AG04449 (cell line): ENCODE measurements at regions of chr1 and their contacts with region 1.

Region 1: DNA sequence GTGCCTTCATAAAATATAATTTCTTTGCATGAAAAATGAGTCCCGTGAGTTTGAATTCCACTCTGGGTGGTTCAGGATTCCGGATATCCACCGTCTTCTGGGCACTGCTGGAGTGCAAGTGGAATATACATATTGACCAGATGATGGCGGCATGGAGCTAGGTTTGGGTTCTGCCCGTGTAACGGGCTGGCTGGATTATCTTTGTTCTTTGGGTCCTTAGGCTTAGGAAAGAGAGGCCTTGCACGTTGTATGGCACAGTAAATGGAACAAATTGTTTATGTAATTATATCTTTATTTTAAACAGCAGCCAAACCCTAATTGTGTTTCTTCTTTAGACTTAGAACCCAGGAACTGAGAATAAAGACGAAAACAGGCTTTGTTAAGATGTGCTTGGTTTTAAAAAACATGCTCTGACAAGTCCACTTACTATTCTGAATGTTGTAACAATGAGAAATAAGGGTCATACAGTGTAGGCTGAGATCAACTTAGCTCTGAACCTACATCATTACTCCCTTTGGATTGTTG is 13.5 kb upstream of the ACBD6 start:
- DNase-seq: no peak
- H3K4me3 ChIP-seq: no peak overlapping the region
- CTCF ChIP-seq: peak; percentile 68

Region 2: DNA sequence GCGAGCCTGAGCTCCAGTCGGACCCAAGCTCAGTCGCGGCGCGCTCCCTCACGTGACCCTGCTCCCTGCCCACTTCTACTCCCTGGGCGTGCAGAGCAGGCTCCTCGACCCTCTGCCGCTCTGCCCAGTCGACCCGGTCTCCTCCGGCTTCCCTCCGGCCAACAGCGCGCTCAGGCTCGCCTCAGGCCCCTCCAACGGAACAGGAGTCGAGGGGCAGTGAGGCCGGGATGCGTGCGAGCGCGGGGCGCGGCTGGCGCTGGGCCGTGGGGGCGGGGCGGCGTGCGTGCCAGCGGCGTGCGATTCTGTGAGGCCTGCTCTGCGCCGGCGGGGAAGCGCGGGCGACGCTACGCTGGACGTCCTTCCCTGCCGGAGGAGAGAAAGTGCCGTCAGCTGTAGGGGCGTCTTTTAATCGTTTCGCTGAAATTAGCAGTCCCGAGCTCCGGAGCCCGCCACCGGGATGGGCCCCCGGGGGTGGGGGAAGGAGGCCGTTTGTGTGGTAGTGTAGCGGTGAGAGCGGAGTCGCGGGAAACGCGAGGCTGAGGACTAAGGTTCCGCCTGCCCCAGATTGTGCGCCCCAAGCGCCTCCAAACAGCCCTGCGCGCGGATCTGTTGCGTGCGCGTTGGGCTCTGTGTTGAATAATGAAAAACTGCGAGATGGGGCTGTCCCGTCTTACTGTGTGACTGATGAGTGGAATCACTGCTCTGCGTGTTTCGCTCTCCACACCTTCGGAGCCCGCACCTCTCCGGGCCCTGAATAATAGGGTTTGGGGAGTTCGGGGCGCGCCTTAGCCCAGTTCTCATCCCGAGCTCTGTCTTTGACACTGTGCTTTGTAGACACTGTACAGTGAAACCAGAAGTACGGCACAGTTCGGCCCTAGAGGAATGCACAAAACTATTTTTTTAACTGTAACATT is 13.3 kb before region 1 on chr1 and contains the start of gene ACBD6:
- CTCF ChIA-PET with region 1: interaction called, 62 read pairs
- POLR2A ChIA-PET with region 1: no interaction called
- DNase-seq: no peak
- H3K4me3 ChIP-seq: peak within 1 kb of the TSS; percentile 91
- CTCF ChIP-seq: peak; percentile 14

Region 3: DNA sequence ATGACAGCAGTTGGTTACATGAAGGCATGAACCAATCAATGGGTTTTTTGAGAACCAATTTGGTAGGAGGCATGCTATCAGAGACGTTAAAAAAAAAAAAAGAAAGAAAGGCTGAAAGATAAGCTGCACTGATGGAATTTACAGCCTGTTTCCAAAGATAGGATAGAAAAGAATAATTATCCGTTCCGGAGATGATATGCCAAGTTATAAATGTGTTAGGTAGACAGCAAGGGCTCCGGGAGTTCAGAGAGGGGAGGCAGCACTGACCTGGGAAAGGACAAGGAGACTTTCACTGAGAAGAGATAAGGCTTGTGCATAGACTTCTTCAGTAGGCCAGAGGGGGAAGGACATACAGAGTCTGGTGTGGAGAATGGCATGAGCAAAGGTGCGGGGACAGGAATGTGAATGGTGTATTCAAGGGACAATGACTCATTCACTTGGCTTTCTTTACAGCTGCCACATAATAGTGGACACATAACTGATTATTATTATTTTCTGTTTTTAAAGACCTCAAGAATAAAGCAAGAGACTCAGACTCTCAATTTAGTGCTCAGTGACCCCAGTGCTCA is 11.3 kb after region 1 on chr1:
- CTCF ChIA-PET with region 1: interaction called, 30 read pairs
- POLR2A ChIA-PET with region 1: no interaction called
- DNase-seq: no peak
- H3K4me3 ChIP-seq: no peak overlapping the region
- CTCF ChIP-seq: no peak

Region 4: DNA sequence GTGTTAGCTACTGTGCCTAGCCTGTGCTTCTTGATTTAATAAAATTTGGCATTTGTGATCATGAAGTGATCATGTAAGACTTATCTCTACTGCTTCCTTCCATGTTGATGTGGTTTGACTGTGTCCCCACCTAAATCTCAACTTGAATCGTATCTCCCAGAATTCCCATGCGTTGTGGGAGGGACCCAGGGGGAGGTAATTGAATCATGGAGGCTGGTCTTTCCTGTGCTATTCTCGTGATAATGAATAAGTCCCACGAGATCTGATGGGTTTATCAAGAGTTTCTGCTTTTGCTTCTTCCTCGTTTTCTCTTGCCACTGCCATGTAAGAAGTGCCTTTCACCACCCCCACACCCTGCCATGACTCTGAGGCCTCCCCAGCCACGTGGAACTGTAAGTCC is 42.7 kb after region 1 on chr1 and contains the start of gene OVAAL:
- CTCF ChIA-PET with region 1: no interaction called
- POLR2A ChIA-PET with region 1: no interaction called
- DNase-seq: no peak
- H3K4me3 ChIP-seq: no peak within 1 kb of the TSS
- CTCF ChIP-seq: no peak